ENCODE measurements at regions of chr10 and their contacts with region 1.

Region 1: GRCh38 chr10:35546824-35547273 is 58.3 kb upstream of the GJD4 start:
- DNase-seq: no peak
- H3K4me3 ChIP-seq: no peak overlapping the region
- H3K27ac ChIP-seq: no peak overlapping the region
- H3K4me1 ChIP-seq: no peaks in the 10 kb centered on the region
- H3K27me3 ChIP-seq: no peaks in the 10 kb centered on the region
- CTCF ChIP-seq: peak; percentile 26 to 34 (median 32); a peak in 3 of 4 replicates
- EP300 ChIP-seq: no peak
- POLR2A ChIP-seq: no peak
- RAD21 ChIP-seq: peak; percentile 33 to 49; a peak in 3 of 4 replicates

Region 2: DNA sequence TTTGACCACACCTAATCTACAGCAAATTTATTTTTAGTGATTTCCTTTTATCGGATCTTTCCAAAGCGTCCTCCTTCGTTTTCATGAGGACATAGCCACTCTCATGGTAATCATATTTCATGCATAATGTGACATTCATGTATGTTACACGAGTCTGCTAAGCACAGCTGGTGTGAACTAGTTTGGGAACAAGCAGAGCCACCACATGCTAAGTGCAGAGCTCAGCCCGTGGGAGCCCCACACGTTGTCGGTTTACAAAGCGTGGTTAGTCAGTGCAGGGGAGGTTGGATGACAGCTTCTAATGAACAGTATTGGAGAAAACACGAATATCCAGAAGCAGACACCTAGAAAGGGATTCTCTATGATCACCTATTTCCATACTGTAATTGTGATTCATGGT is 20.1 kb before region 1 on chr10:
- CTCF ChIA-PET with region 1: interaction called, 13 read pairs
- POLR2A ChIA-PET with region 1: no interaction called
- DNase-seq: no peak
- H3K4me3 ChIP-seq: no peak overlapping the region
- H3K27ac ChIP-seq: no peak overlapping the region
- H3K4me1 ChIP-seq: peaks cover 0 to 6% (median 0%) of the 10 kb centered on the region in 4 experiments; a peak in 3 of 7 replicates
- H3K27me3 ChIP-seq: no peaks in the 10 kb centered on the region
- CTCF ChIP-seq: no peak
- EP300 ChIP-seq: no peak
- POLR2A ChIP-seq: no peak
- RAD21 ChIP-seq: no peak

Region 3: DNA sequence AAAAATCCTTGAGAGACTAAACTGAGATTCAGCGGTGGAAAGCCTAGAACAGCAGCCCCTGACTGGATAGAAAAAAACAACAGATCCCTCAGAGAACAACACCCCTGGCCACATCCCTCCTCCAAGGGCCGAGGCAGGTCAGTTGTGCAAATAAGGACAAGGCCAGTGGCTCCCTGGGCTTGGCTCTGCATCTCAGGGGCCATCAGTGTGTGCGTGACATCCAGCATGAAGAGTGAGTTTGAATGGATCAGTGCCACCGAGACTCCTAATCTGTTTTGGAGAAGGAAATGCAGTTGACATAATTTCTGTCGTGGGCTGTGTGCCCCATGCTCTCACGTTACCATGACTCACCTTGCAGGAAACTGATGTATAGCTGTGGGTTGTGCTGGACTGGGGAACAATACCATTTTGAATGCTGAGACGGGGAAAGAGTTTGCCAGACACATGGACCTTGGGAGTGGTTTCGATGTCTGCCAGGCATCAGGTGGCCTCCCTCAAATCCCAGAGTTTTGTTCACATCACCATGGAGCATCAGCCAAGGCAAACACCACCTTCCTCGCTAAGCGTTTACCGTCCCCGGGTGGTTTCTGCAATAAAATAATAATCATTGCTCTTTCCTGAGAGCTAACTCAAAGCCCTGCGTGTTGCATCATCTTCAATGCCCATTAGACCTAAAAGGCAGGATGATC is 248.4 kb after region 1 on chr10:
- CTCF ChIA-PET with region 1: no interaction called
- POLR2A ChIA-PET with region 1: no interaction called
- DNase-seq: no peak
- H3K4me3 ChIP-seq: no peak overlapping the region
- H3K27ac ChIP-seq: no peak overlapping the region
- H3K4me1 ChIP-seq: no peaks in the 10 kb centered on the region
- H3K27me3 ChIP-seq: no peaks in the 10 kb centered on the region
- CTCF ChIP-seq: no peak
- EP300 ChIP-seq: no peak
- POLR2A ChIP-seq: no peak
- RAD21 ChIP-seq: no peak